CD4-positive, alpha-beta memory T cell (primary cell): ENCODE measurements at regions of chr9 and their contacts with region 1.

Region 1: DNA sequence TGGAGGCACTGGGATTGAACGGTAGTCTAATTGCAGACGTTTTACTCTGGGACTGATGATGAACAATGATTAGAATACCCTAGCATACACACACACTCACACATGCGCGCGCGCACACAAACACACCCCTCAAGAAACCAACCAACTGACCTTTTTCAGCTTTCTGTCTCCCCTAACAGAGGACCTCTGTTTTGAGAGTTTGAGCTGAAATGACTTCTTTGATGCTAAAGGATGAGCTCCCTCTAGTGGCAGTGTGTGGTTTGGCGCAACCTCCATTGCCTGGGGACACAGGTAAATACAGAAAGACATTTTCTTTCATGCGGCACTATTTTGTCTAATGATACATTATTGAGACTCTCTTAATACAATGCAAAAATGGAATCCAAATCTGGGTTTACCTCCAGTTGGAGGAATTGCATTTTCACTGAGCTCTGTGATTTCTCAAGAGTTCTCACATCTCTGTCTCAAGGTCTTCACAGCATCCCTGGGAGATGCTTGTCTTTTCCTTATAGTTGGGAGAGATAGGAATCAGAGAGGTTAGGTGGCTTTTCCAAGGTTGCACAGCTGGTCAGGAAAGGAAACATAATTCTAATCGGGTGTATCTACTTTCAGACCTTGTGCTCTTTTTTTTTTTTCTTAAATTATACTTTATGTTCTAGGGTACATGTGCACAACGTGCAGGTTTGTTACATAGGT is 187.5 kb downstream of the TMEM38B start:
- DNase-seq: peak; percentile 31 to 48 (median 36)
- H3K4me3 ChIP-seq: no peak overlapping the region
- H3K4me3 Mint-ChIP-seq: no peak overlapping the region
- H3K27ac ChIP-seq: no peak overlapping the region
- H3K27ac Mint-ChIP-seq: no peak overlapping the region
- H3K4me1 ChIP-seq: peaks cover 2% of the 10 kb centered on the region
- H3K4me1 Mint-ChIP-seq: peaks cover 0 to 7% (median 4%) of the 10 kb centered on the region in 4 donors
- H3K27me3 ChIP-seq: no peaks in the 10 kb centered on the region
- H3K27me3 Mint-ChIP-seq: peaks cover 0 to 3% of the 10 kb centered on the region in 2 donors

Region 2: GRCh38 chr9:105357937-105358336 is 523.9 kb before region 1 on chr9:
- CTCF ChIA-PET with region 1: no interaction called
- POLR2A ChIA-PET with region 1: no interaction called
- intact Hi-C with region 1: no loop called
- DNase-seq: no peak
- H3K4me3 ChIP-seq: no peak overlapping the region
- H3K4me3 Mint-ChIP-seq: no peak overlapping the region
- H3K27ac ChIP-seq: no peak overlapping the region
- H3K27ac Mint-ChIP-seq: no peak overlapping the region
- H3K4me1 ChIP-seq: no peaks in the 10 kb centered on the region
- H3K4me1 Mint-ChIP-seq: peaks cover 0 to 9% (median 6%) of the 10 kb centered on the region in 4 donors
- H3K27me3 ChIP-seq: no peaks in the 10 kb centered on the region
- H3K27me3 Mint-ChIP-seq: no peaks in the 10 kb centered on the region

Region 3: DNA sequence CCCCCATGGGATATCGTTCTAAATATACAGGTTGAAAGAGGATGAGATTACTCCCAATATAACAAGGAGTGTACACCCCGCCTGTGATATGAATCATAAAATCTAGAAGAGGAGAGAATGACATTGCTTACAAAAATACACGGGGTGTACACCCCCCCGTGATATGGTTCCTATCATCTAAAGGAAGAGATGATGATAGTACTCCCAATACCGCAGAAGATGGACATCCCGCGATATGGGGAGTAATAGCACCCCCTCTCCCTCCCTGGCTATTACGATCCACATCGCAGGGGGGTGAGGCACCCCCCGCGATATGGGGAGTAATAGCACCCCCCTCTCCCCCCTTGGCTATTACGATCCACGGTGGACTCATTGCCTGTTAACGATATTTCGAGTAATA is 62.9 kb before region 1 on chr9:
- CTCF ChIA-PET with region 1: no interaction called
- POLR2A ChIA-PET with region 1: no interaction called
- intact Hi-C with region 1: no loop called
- DNase-seq: no peak
- H3K4me3 ChIP-seq: no peak overlapping the region
- H3K4me3 Mint-ChIP-seq: no peak overlapping the region
- H3K27ac ChIP-seq: no peak overlapping the region
- H3K27ac Mint-ChIP-seq: no peak overlapping the region
- H3K4me1 ChIP-seq: no peaks in the 10 kb centered on the region
- H3K4me1 Mint-ChIP-seq: no peaks in the 10 kb centered on the region
- H3K27me3 ChIP-seq: no peaks in the 10 kb centered on the region
- H3K27me3 Mint-ChIP-seq: no peaks in the 10 kb centered on the region

Region 4: GRCh38 chr9:105842023-105842644 is 39.7 kb before region 1 on chr9:
- CTCF ChIA-PET with region 1: interaction called, 36 read pairs
- POLR2A ChIA-PET with region 1: no interaction called
- intact Hi-C with region 1: loop called (anchors 1 kb)
- DNase-seq: peak in 2 of 5 donors; percentile 4 to 11
- H3K4me3 ChIP-seq: no peak overlapping the region
- H3K4me3 Mint-ChIP-seq: no peak overlapping the region
- H3K27ac ChIP-seq: no peak overlapping the region
- H3K27ac Mint-ChIP-seq: no peak overlapping the region
- H3K4me1 ChIP-seq: no peaks in the 10 kb centered on the region
- H3K4me1 Mint-ChIP-seq: no peaks in the 10 kb centered on the region
- H3K27me3 ChIP-seq: no peaks in the 10 kb centered on the region
- H3K27me3 Mint-ChIP-seq: peaks cover 0 to 3% of the 10 kb centered on the region in 2 donors

Region 5: DNA sequence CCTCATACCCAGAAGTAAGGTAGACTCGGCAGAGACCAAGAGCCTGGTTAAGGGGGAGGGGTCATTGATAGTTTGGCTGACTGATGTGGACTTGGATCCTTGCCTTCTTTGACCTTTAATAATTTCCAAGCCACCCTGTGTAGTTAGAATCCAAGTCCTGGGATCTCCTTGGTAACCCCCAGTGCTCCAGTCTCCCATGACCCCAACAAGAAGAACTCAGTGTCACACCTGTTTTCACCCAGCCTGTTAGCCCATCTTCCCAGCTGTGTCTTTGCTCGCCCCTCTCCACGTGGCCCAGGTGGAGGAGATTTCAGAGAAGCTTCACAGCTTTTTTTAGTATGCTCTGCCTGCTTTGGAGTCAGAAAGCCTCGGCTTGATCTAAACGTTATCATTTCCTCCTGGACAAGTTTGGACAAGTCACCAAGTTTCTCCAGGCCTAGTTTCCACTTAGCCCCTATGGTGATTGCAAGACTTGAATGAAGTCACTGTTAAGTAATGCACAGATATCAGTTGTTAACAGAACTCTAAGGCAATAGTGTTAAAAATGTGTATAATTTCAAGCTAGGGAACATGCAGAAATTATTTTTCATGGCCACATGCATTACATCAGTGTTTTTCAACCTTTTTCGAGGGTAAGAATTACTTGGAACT is 17.4 kb before region 1 on chr9:
- CTCF ChIA-PET with region 1: interaction called, 10 read pairs
- POLR2A ChIA-PET with region 1: no interaction called
- intact Hi-C with region 1: no loop called
- DNase-seq: no peak
- H3K4me3 ChIP-seq: no peak overlapping the region
- H3K4me3 Mint-ChIP-seq: no peak overlapping the region
- H3K27ac ChIP-seq: no peak overlapping the region
- H3K27ac Mint-ChIP-seq: no peak overlapping the region
- H3K4me1 ChIP-seq: peaks cover 4% of the 10 kb centered on the region
- H3K4me1 Mint-ChIP-seq: peaks cover 0 to 6% (median 4%) of the 10 kb centered on the region in 4 donors
- H3K27me3 ChIP-seq: no peaks in the 10 kb centered on the region
- H3K27me3 Mint-ChIP-seq: peaks cover 0 to 3% of the 10 kb centered on the region in 2 donors